Right ventricle myocardium superior (tissue), 1 donor: ENCODE measurements at regions of chr17 and their contacts with region 1.

Region 1: GRCh38 chr17:46940621-46941404 is 17.9 kb downstream of the GOSR2 start:
- DNase-seq: peak; percentile 77
- ATAC-seq: peak; percentile 82

Region 2: DNA sequence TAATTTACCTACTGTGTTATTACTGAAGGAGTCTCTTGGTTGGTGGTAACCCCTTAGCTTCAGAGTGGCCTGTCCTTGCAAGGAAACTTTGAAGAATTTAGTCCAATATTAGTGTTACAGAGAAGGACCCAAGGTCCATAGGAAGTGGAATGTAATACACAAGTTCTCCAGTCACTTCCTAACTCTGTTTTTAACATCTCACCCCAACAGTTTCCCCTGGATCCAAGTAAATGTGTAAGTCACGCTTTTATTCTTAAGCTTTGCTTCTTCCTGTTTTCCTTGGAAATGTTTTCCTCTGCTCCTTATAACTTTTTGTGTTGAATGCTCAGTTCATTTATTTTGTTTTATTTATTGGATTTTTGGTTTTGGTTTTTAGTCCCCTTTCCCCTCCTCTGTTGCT is 64.1 kb after region 1 on chr17:
- intact Hi-C with region 1: loop called (anchors 5 kb)
- DNase-seq: no peak
- ATAC-seq: no peak